ENCODE measurements at regions of chr21 and their contacts with region 1.

Region 1: DNA sequence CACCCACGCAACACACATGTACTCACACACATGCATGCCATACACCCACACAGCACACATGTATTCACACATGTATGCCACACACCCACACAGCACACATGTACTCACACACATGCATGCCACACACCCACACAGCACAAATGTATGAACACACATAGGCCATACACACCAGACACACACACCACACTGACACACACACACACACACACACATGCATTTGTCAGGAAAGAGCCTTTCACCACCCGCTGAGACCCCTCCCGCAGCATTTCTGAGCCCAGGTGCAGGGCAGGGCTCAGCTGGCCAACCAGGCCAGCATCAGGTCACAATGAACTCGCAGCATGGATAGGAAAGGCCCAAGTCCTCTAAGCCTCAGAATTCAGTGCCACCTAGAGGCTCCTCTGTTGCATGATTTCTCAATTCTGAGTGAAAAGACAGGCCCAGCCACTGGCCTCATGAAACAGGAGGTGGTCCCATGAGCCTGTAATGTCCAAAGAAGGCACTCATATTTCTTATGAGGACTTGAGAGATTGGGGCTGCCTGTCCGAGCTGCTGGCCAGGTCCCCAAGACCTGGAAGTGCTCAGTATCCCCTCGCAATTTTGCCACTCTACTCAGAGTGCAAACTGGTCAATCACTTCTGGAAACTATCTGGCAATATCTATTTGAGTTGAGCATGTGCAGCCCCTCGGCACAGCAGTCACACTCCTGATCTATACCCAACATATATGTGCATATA is 57.3 kb downstream of the PSMG1 start:
- DNase-seq: peak; percentile 6 to 25
- H3K4me3 ChIP-seq: no peak overlapping the region
- H3K4me1 ChIP-seq: no peaks in the 10 kb centered on the region
- H3K27me3 ChIP-seq: 0 out of 2 replicates have a peak, but pooled peaks cover 6% of the 10 kb centered on the region

Region 2: DNA sequence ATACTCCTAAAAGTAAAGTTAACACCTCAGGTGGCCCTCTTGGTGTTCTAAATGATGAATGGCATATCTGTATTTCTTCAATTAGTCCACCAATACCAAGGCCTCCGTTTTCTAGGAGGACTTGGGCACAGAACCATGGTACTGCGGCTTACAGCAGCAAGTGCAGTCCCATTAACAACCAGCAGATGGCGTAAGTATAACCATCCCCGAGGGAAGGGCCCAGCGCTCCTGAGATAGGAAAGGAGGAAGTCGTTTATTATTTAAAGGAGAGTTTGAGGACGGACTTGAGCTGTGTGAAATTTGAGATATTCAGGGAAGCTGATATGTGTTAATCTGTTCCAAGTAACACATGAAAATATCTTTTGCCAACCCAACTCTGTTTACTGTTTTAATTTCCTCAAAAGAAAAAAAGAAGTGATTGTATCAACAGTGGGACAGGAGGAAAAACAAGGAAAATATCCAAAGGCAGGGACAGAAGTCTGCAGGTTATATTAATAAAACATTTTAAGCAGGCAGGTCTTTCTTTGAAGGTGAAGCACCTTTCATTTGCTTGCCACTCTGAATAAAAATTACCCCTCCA is 906.8 kb before region 1 on chr21:
- in situ Hi-C with region 1: loop called (anchors 25 kb)
- DNase-seq: peak in 1 of 2 experiments; percentile 51
- H3K4me3 ChIP-seq: no peak overlapping the region
- H3K4me1 ChIP-seq: no peaks in the 10 kb centered on the region
- H3K27me3 ChIP-seq: no peaks in the 10 kb centered on the region